CD8-positive, alpha-beta T cell (primary cell): ENCODE measurements at regions of chr12 and their contacts with region 1.

Region 1: GRCh38 chr12:11812586-11813427 is 163.3 kb downstream of the ETV6 start:
- DNase-seq: peak in 5 of 9 experiments; percentile 4 to 52 (median 23)
- ATAC-seq: peak; percentile 49
- H3K4me3 ChIP-seq: peak overlapping the region; percentile 0 to 26
- H3K4me3 Mint-ChIP-seq: peak overlapping the region; percentile 9
- H3K27ac ChIP-seq: no peak overlapping the region
- H3K27ac Mint-ChIP-seq: peak overlapping the region; percentile 34
- H3K4me1 ChIP-seq: peaks cover 18% of the 10 kb centered on the region
- H3K4me1 Mint-ChIP-seq: peaks cover 23% of the 10 kb centered on the region
- H3K27me3 ChIP-seq: no peaks in the 10 kb centered on the region
- H3K27me3 Mint-ChIP-seq: no peaks in the 10 kb centered on the region
- CTCF ChIP-seq: no peak

Region 2: DNA sequence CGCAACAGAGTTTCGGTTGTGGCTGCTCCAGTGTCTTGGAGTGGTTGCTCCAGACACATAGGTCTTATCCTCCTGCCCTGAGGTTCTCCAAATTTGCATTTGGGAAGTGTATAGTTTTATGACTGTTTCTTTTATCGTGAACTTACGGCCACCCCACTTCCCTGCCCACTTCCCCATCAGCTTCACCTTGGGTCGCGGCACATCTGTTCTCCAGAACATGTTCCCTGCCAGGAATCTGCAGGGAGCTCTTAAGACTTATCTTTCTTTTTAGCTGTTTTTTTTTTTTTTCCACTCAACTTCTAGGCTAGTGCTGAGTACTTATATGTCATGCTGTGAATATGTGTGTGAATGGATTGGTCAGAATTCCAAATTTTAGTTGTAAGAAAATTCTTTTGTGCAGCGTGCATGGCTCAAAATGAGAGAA is 87.9 kb before region 1 on chr12:
- CTCF ChIA-PET with region 1: no interaction called
- POLR2A ChIA-PET with region 1: no interaction called
- intact Hi-C with region 1: loop called in 1 of 2 experiments (anchors 1 kb)
- DNase-seq: no peak
- ATAC-seq: no peak
- H3K4me3 ChIP-seq: no peak overlapping the region
- H3K4me3 Mint-ChIP-seq: no peak overlapping the region
- H3K27ac ChIP-seq: no peak overlapping the region
- H3K27ac Mint-ChIP-seq: no peak overlapping the region
- H3K4me1 ChIP-seq: peaks cover 17% of the 10 kb centered on the region
- H3K4me1 Mint-ChIP-seq: peaks cover 32% of the 10 kb centered on the region
- H3K27me3 ChIP-seq: no peaks in the 10 kb centered on the region
- H3K27me3 Mint-ChIP-seq: no peaks in the 10 kb centered on the region
- CTCF ChIP-seq: no peak

Region 3: DNA sequence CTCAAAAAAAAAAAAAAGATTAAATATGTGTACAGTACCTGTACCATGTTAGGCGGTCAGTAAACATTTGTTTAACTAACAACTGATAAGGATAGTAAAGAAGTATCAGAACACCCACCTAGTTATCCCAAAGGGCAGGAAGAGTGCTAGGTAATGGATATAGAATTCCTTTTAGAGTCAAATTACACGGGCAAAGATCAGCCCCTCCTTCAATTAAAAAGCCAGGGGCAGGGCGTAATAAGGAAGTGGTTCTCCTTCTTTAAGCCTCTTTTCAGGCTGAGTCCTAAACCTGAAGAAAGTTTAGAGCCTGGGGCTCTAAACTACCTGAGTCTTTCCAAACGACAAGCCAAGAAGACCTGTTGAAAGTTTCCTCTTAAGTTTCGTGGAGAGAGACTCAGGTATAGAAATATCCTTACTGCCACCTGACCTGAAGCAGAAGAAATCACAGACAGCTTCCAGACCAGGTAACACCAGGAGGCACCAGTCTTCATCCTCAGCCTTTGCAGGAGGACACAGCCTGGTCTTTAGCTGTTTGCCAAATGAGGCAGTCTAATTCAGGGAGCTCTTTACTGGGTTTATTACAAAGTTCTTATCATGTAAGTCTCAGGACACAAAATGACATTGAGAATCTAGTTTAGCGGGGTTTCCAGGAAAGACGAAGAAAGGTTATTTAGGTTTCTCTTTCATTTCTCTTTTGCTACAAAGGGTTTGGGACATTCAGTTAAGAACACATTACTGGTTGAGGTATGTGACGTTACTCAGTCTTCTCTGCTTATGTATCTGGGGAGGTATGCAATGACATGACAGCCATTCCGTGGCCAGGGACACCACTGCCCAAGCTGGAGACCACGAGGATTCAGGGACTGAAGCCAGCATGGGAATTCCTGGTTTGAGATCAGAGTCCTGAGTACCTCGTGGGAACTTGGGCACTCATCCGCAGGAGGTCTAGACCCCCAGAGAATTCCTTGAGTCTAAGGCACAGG is 258.2 kb after region 1 on chr12 and contains the start of gene BCL2L14:
- CTCF ChIA-PET with region 1: no interaction called
- POLR2A ChIA-PET with region 1: no interaction called
- intact Hi-C with region 1: no loop called
- DNase-seq: peak in 2 of 9 experiments; percentile 7 to 37
- ATAC-seq: peak; percentile 64
- H3K4me3 ChIP-seq: peak within 1 kb of the TSS; percentile 34 to 44
- H3K4me3 Mint-ChIP-seq: peak within 1 kb of the TSS; percentile 74
- H3K27ac ChIP-seq: no peak within 1 kb of the TSS
- H3K27ac Mint-ChIP-seq: peak within 1 kb of the TSS; percentile 69
- H3K4me1 ChIP-seq: peaks cover 13% of the 10 kb centered on the region
- H3K4me1 Mint-ChIP-seq: peaks cover 22% of the 10 kb centered on the region
- H3K27me3 ChIP-seq: peaks cover 3 to 4% of the 10 kb centered on the region in 2 experiments
- H3K27me3 Mint-ChIP-seq: no peaks in the 10 kb centered on the region
- CTCF ChIP-seq: no peak
- total RNA-seq, gene BCL2L14: 0.38 to 0.61 TPM